Activated CD8-positive, alpha-beta T cell treated with anti-CD3 and anti-CD28 coated beads, Interleukin-2, amount 10 ng/mL, durations not matched to agents 7 days and 5 days (primary cell): ENCODE measurements at regions of chr3 and their contacts with region 1.

Region 1: DNA sequence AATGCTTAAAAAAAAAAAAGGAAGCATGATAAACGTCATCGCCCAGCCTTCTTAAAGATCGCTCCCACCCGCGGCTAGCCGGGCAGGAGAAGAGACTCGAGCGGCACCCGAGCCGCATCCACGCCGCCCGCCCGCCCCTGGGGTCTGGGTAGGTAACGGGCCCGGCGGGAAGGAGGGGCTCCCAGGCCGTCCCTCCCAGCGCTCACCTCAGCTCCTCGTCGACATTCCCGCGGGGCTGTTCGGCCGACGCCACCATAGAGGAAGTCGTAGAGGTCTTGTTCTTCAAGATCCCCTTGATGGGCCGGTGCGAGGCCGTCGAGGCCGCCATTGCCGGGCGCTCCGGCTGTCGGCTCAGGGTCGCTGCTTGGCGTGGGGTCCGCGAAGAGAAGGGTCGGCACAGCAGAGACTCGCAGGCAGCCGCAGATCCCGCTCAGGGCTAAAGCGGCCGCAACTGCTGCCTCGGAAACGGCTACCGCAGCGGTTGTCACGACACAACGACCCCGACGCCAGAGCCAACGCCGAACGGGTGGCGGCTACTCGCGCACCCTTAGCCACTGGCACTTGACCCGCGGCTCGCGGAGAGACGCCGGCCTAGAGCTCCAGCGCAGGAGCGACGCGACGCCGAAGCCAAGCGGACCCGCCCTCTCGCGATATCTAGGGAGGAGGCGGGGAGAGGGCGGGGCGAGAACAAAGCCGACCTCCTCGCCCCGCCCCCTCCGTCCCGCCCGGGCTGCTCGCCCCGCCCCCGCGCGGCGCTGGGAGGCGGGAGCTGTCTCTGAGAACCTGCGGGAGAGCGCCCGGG is at the start of gene PPP1R2:
- DNase-seq: peak; percentile 93
- ATAC-seq: peak; percentile 82
- H3K4me3 Mint-ChIP-seq: peak within 1 kb of the TSS; percentile 92
- H3K27ac Mint-ChIP-seq: peak within 1 kb of the TSS; percentile 89
- H3K4me1 Mint-ChIP-seq: peaks cover 75% of the 10 kb centered on the region
- H3K27me3 Mint-ChIP-seq: no peaks in the 10 kb centered on the region
- total RNA-seq, gene PPP1R2: 72.0 to 72.6 TPM

Region 2: GRCh38 chr3:195556387-195556786 is 13.5 kb after region 1 on chr3:
- CTCF ChIA-PET with region 1: interaction called, 10 read pairs
- POLR2A ChIA-PET with region 1: interaction called, 21 read pairs
- DNase-seq: no peak
- ATAC-seq: no peak
- H3K4me3 Mint-ChIP-seq: no peak overlapping the region
- H3K27ac Mint-ChIP-seq: no peak overlapping the region
- H3K4me1 Mint-ChIP-seq: peaks cover 46% of the 10 kb centered on the region
- H3K27me3 Mint-ChIP-seq: no peaks in the 10 kb centered on the region